ENCODE measurements at regions of chr14 and their contacts with region 1.

Region 1: DNA sequence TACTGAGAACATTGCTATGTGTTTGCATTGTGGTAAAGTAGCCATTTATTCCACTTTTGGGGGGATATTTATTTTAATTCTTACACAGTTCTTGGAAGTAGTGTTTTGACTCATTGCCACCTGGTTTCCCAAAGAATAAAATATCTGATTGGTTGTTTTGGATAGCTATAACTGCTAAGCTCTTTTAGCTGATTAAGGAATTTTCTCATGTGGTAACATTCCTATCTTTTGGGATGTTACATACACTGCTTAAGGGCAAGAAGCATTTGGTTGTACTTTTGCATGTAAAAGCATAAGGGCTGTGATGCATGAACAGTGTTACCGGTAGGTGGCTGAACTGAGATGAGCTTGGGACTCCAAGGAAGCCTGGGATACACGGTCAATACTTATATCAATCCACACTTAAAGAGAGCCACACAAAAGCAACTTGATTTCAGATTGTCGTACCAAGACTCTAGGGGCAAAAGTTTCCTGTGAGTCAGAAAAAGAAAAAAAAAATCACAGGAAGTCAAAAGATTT is 71.4 kb upstream of the PRKD1 start:
- DNase-seq: no peak
- ATAC-seq: no peak
- H3K4me3 ChIP-seq: no peak overlapping the region
- H3K27ac ChIP-seq: no peak overlapping the region
- H3K4me1 ChIP-seq: no peaks in the 10 kb centered on the region
- H3K27me3 ChIP-seq: no peaks in the 10 kb centered on the region
- CTCF ChIP-seq: no peak

Region 2: GRCh38 chr14:29710015-29710565 is 289.0 kb before region 1 on chr14:
- intact Hi-C with region 1: loop called in 5 of 10 experiments (anchors 2 to 10 kb)
- DNase-seq: no peak
- ATAC-seq: no peak
- H3K4me3 ChIP-seq: no peak overlapping the region
- H3K27ac ChIP-seq: no peak overlapping the region
- H3K4me1 ChIP-seq: no peaks in the 10 kb centered on the region
- H3K27me3 ChIP-seq: no peaks in the 10 kb centered on the region
- CTCF ChIP-seq: peak; percentile 7 to 60 (median 39)

Region 3: DNA sequence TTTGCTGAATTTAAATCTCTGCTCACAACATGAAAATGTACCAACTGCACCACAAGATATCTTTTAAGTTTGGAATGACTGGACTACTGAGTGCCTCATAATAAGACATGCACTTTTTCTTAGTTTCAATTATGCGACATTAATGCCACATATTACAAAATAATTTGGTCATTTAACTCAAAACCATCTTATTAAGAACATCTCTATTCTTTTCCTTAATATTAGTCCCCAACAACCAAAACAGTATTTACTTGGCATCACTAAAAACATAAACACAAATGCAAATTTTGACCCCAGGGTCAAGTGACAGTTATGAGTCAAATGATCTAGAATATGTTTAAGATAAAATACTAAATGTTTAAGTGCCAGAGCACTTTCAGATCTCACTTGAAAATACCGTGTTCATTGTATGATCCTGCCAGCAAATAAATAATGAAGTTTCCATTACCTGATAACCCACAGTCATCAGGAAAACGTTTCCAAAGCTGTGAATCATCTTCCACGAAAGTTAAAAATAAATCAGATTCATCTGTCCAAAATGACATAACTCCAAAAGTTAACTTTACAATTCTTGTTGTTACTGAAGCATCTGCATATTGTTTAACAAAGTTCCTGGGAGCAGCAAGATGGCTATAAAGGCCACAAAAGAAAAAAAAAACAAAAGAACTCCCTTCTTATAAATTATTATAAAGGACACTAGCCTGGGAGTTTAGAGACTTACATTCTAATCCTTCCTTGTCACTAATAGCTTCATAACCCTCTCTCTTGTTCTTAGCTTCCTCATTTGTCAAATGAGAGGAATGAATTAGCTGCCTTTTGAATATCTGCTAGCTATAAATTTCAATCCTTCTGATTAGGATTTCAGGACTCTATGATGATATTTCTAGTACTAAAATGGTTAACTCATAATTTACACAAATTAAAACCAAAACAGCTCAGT is 995.9 kb after region 1 on chr14:
- intact Hi-C with region 1: no loop called
- DNase-seq: no peak
- ATAC-seq: peak in 7 of 8 donors; percentile 34 to 68 (median 53)
- H3K4me3 ChIP-seq: no peak overlapping the region
- H3K27ac ChIP-seq: peak overlapping the region in 7 of 10 donors; percentile 2 to 63 (median 54)
- H3K4me1 ChIP-seq: peaks cover 0 to 67% (median 43%) of the 10 kb centered on the region in 9 donors
- H3K27me3 ChIP-seq: no peaks in the 10 kb centered on the region
- CTCF ChIP-seq: no peak

Measured in heart right ventricle (tissue), 16 donors.